ENCODE measurements at regions of chr5 and their contacts with region 1.

Region 1: GRCh38 chr5:71757590-71758543 is 38.8 kb downstream of the CARTPT start:
- DNase-seq: peak; percentile 67
- ATAC-seq: peak; percentile 100
- H3K4me3 ChIP-seq: peak overlapping the region in 2 of 3 experiments; percentile 20 to 48; a peak in 1 of 6 replicates
- H3K27ac ChIP-seq: no peak overlapping the region
- H3K4me1 ChIP-seq: peaks cover 7% of the 10 kb centered on the region; the same call in 1 of the 2 replicates
- H3K27me3 ChIP-seq: peaks cover 0 to 5% of the 10 kb centered on the region in 2 experiments; a peak in 1 of 5 replicates
- CTCF ChIP-seq: peak; percentile 95
- EP300 ChIP-seq: no peak
- POLR2A ChIP-seq: no peak
- RAD21 ChIP-seq: peak; percentile 91

Region 2: GRCh38 chr5:71475788-71476384 is 282.0 kb before region 1 on chr5:
- CTCF ChIA-PET with region 1: interaction called, 12 read pairs
- POLR2A ChIA-PET with region 1: no interaction called
- in situ Hi-C with region 1: no loop called
- intact Hi-C with region 1: no loop called
- DNase-seq: peak; percentile 18
- ATAC-seq: peak; percentile 90
- H3K4me3 ChIP-seq: no peak overlapping the region
- H3K27ac ChIP-seq: no peak overlapping the region
- H3K4me1 ChIP-seq: no peaks in the 10 kb centered on the region
- H3K27me3 ChIP-seq: no peaks in the 10 kb centered on the region
- CTCF ChIP-seq: peak; percentile 65
- EP300 ChIP-seq: no peak
- POLR2A ChIP-seq: no peak
- RAD21 ChIP-seq: no peak

Region 3: DNA sequence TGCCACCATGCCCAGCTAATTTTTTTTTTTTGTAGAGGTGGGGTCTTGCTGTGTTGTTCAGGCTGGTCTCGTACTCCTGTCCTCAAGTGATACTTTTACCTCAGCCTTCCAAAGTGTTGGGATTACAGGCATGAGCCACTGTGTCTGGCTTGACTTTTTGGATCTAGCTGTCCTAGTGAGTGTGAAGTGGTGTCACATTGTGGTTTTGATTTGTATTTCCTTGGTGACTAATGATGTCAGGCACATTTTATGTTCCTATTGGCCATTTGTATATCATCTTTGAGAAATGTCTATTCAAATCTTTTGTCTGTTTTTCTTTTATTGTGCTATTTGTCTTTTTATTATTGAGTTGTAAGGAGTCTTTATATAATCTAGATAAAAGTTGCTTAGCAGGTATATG is 224.3 kb before region 1 on chr5:
- CTCF ChIA-PET with region 1: no interaction called
- POLR2A ChIA-PET with region 1: no interaction called
- in situ Hi-C with region 1: no loop called
- intact Hi-C with region 1: loop called (anchors 10 kb)
- DNase-seq: no peak
- ATAC-seq: no peak
- H3K4me3 ChIP-seq: no peak overlapping the region
- H3K27ac ChIP-seq: no peak overlapping the region
- H3K4me1 ChIP-seq: no peaks in the 10 kb centered on the region
- H3K27me3 ChIP-seq: no peaks in the 10 kb centered on the region
- CTCF ChIP-seq: no peak
- EP300 ChIP-seq: no peak
- POLR2A ChIP-seq: no peak
- RAD21 ChIP-seq: no peak

Region 4: DNA sequence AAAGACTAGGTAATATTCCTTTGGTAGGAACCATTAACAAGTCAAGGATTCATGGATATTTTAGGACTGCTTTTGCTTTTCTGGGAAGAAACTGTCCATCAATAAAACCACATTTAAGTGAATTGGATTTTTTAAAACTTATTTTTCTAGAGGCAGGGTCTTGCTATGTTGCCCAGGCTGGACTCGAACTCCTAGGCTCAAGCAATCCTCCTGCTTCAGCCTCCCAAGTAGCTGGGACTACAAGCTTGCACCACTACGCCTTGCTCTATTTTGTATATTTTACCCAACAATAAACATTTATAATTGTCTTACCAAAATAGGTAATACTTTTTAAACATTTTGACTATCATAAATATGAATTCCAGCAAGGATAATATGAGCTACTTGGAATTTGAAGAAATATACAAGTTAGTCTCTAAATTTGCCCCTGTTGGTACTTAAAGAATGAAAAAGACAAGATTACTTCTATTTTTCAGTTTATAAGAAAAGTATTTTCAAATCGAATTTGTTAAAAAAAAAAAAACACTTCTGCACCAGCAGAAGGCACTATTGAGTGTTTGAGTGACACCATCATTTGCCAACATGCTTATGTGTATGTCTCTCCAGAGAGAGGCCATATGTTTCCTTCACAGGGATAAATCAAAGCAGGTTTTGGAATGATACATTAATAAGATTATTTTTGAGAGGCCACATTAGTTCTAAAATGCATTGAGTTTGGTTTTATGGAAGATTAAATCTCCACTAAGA is 98.8 kb before region 1 on chr5:
- CTCF ChIA-PET with region 1: interaction called, 30 read pairs
- POLR2A ChIA-PET with region 1: no interaction called
- in situ Hi-C with region 1: loop called (anchors 5 kb)
- intact Hi-C with region 1: loop called (anchors 1 kb)
- DNase-seq: peak; percentile 31
- ATAC-seq: no peak
- H3K4me3 ChIP-seq: no peak overlapping the region
- H3K27ac ChIP-seq: no peak overlapping the region
- H3K4me1 ChIP-seq: peaks cover 17% of the 10 kb centered on the region
- H3K27me3 ChIP-seq: no peaks in the 10 kb centered on the region
- CTCF ChIP-seq: peak; percentile 48
- EP300 ChIP-seq: no peak
- POLR2A ChIP-seq: no peak
- RAD21 ChIP-seq: no peak

Measured in HepG2 (cell line).